ENCODE measurements at regions of chr7 and their contacts with region 1.

Region 1: DNA sequence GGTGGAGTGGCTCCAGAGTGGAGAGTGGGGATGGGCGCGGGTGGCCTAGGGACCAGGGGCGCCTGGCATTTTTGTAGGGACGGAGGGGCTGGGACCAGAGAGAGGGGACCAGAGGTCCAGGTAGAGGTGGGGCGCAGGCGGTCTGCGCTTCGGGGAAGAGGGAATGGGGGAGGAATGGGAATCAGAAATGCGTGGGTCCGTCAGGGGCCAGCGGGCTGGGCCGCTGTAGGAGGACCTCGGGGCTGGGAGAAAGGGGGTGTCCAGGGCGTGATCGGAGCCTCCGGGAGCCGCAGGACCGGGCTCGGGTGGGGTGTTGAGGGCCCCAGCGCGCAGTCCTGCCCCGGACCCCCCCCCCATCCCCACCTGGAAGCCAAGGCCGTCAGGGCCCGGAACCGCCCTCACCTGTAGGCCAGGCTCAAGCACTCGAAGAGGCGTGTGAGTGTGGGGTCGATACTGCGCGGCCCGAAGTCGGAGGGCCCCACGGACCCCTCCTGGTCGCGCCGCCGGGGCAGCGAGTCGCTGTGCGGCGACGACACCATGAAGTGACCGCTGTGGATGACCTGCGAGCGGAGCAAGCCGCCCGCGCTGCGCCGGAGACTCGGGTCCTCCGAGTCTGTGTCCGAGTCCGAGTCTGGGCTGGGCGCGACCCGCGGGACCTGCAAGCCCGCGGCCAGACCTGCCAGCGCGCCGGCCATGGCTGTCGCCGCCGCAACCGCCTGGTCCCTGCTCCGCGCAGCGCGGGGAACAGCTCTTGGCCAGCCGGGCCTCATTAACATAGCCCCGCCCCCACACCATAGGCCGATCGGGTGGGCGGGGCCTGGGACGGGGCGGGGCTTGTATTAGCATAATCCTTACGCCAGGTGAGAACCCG is at the start of gene MLXIPL:
- DNase-seq: peak; percentile 93 to 94
- H3K4me3 ChIP-seq: peak within 1 kb of the TSS; percentile 98
- H3K4me3 Mint-ChIP-seq: peak within 1 kb of the TSS; percentile 88
- H3K27ac Mint-ChIP-seq: no peak within 1 kb of the TSS
- H3K4me1 ChIP-seq: peaks cover 18% of the 10 kb centered on the region
- H3K4me1 Mint-ChIP-seq: peaks cover 8% of the 10 kb centered on the region
- H3K27me3 ChIP-seq: no peaks in the 10 kb centered on the region
- H3K27me3 Mint-ChIP-seq: peaks cover 3% of the 10 kb centered on the region
- CTCF ChIP-seq: no peak
- total RNA-seq, gene MLXIPL: 15.6 and 19.8 TPM in 2 replicates

Region 2: DNA sequence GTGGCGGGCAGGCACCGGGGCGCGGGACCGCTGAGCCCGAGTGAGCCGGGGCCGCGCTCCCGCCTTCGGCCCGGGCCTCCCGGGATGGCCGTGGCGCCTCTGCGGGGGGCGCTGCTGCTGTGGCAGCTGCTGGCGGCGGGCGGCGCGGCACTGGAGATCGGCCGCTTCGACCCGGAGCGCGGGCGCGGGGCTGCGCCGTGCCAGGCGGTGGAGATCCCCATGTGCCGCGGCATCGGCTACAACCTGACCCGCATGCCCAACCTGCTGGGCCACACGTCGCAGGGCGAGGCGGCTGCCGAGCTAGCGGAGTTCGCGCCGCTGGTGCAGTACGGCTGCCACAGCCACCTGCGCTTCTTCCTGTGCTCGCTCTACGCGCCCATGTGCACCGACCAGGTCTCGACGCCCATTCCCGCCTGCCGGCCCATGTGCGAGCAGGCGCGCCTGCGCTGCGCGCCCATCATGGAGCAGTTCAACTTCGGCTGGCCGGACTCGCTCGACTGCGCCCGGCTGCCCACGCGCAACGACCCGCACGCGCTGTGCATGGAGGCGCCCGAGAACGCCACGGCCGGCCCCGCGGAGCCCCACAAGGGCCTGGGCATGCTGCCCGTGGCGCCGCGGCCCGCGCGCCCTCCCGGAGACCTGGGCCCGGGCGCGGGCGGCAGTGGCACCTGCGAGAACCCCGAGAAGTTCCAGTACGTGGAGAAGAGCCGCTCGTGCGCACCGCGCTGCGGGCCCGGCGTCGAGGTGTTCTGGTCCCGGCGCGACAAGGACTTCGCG is 189.9 kb before region 1 on chr7:
- CTCF ChIA-PET with region 1: no interaction called
- POLR2A ChIA-PET with region 1: no interaction called
- intact Hi-C with region 1: no loop called
- DNase-seq: no peak
- H3K4me3 ChIP-seq: peak overlapping the region; percentile 60
- H3K4me3 Mint-ChIP-seq: peak overlapping the region; percentile 69
- H3K27ac Mint-ChIP-seq: no peak overlapping the region
- H3K4me1 ChIP-seq: peaks cover 9% of the 10 kb centered on the region; the same call in 1 of the 2 replicates
- H3K4me1 Mint-ChIP-seq: no peaks in the 10 kb centered on the region
- H3K27me3 ChIP-seq: no peaks in the 10 kb centered on the region
- H3K27me3 Mint-ChIP-seq: peaks cover 2% of the 10 kb centered on the region
- CTCF ChIP-seq: no peak

Region 3: DNA sequence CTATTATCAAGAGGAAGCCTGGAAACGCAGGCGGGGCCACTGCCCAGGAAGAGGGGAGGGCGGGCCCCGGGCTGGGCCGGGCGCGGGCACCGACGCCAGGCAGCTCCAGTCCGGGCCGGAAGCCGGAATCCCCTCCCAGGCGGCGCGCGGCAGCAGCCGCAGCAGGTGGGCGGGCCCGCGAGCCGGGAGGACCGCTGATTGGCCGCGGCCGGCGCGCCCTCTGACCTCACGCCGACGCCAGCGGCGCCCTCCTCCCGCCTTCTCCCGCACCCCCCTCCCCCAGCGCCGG is 67.0 kb before region 1 on chr7:
- CTCF ChIA-PET with region 1: no interaction called
- POLR2A ChIA-PET with region 1: no interaction called
- intact Hi-C with region 1: no loop called
- DNase-seq: peak; percentile 93 to 97
- H3K4me3 ChIP-seq: peak overlapping the region; percentile 98
- H3K4me3 Mint-ChIP-seq: peak overlapping the region; percentile 96
- H3K27ac Mint-ChIP-seq: peak overlapping the region; percentile 99
- H3K4me1 ChIP-seq: peaks cover 10% of the 10 kb centered on the region; the same call in 1 of the 2 replicates
- H3K4me1 Mint-ChIP-seq: peaks cover 11% of the 10 kb centered on the region
- H3K27me3 ChIP-seq: no peaks in the 10 kb centered on the region
- H3K27me3 Mint-ChIP-seq: no peaks in the 10 kb centered on the region
- CTCF ChIP-seq: no peak

Region 4: GRCh38 chr7:73606801-73607691 is 17.0 kb before region 1 on chr7:
- CTCF ChIA-PET with region 1: interaction called, 11 read pairs
- POLR2A ChIA-PET with region 1: no interaction called
- intact Hi-C with region 1: loop called (anchors 2 kb)
- DNase-seq: peak; percentile 63 to 77
- H3K4me3 ChIP-seq: no peak overlapping the region
- H3K4me3 Mint-ChIP-seq: no peak overlapping the region
- H3K27ac Mint-ChIP-seq: no peak overlapping the region
- H3K4me1 ChIP-seq: peaks cover 5% of the 10 kb centered on the region; the same call in 1 of the 2 replicates
- H3K4me1 Mint-ChIP-seq: peaks cover 7% of the 10 kb centered on the region
- H3K27me3 ChIP-seq: no peaks in the 10 kb centered on the region
- H3K27me3 Mint-ChIP-seq: no peaks in the 10 kb centered on the region
- CTCF ChIP-seq: peak; percentile 93 to 94

Region 5: DNA sequence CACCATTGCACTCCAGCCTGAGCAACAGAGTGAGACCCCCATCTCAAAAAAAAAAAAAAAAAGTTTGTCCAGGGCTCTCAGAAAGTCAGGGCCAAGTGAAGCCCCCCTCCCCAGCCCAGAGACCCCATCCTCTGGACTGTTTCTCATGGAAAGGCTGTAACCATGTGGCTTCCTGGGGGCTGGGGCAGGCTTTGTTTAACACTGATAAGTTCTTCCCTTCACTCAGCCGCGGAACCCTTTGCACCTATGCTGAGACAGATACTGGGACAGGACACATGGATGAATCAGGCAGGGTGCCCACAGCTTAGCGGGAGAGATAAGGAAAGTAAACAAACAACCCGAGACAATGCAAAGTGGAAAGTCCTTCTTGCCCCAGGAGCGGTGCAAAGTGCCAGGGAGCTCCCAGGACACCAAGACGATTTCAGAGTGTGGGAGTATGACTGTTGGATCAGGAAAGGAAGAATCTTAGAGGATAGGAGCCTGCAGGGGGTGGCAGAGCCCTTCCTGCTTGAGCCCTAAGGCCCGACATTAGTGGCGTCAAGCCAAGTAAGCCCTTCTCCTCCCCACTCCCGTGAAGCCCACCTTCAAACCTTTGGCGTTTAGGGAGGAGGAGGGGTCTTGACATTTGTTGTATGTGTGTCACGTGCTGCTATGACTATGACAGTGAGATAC is 11.3 kb before region 1 on chr7:
- CTCF ChIA-PET with region 1: interaction called, 11 read pairs
- POLR2A ChIA-PET with region 1: interaction called, 3 read pairs
- intact Hi-C with region 1: loop called (anchors 2 kb)
- DNase-seq: peak; percentile 83 to 90
- H3K4me3 ChIP-seq: no peak overlapping the region
- H3K4me3 Mint-ChIP-seq: peak overlapping the region; percentile 52
- H3K27ac Mint-ChIP-seq: peak overlapping the region; percentile 48
- H3K4me1 ChIP-seq: peaks cover 26% of the 10 kb centered on the region
- H3K4me1 Mint-ChIP-seq: peaks cover 15% of the 10 kb centered on the region
- H3K27me3 ChIP-seq: no peaks in the 10 kb centered on the region
- H3K27me3 Mint-ChIP-seq: no peaks in the 10 kb centered on the region
- CTCF ChIP-seq: peak in 1 of 2 experiments; percentile 43

Region 6: DNA sequence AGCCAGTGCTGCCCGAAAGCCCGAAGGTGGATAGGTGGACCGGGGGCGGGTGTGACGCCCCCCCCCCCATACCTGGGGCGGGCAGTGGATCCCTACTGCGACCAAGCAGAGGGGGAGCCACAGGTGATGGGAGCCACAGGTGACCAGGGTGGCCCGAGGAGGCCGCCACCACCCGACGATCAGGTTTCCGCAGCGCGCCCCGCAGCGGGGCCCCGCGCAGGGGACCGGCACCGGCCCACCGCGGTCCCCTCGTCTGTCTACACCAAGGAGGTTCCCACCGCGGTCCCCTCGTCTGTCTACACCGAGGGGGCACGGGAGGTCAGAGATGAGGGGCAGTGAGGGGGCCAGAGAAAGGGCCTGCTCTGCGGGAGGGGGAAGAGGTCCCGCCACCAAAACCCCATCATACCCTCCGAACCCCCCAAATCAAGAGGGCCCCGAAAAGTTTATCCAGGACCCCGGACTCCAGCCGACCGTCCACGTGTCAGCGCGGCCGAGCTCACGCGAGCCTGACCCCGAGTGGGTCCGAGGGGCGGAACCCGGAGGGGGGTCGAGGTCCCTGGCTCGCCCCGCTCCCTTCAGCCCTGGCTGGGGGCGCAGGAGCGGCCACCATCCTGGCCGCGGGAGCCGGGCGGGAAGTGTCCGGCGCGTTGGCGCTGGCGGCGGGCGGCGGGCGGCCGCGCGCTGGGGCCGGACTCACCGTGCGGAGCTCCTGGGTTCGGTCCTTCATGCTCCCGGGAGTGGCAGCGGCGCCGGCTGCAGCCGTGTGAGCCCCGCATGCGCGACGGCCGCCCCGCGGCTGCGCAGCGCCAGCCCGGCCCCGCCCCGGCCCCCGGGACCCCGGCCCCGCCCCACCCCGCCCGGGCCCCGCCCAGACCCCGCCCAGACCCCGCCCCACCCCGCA is 95.1 kb after region 1 on chr7 and contains the start of gene STX1A:
- CTCF ChIA-PET with region 1: interaction called, 4 read pairs
- POLR2A ChIA-PET with region 1: interaction called, 4 read pairs
- intact Hi-C with region 1: loop called (anchors 5 kb)
- DNase-seq: peak; percentile 79 to 86
- H3K4me3 ChIP-seq: peak within 1 kb of the TSS; percentile 89
- H3K4me3 Mint-ChIP-seq: peak within 1 kb of the TSS; percentile 73
- H3K27ac Mint-ChIP-seq: peak within 1 kb of the TSS; percentile 75
- H3K4me1 ChIP-seq: peaks cover 38% of the 10 kb centered on the region
- H3K4me1 Mint-ChIP-seq: peaks cover 16% of the 10 kb centered on the region
- H3K27me3 ChIP-seq: no peaks in the 10 kb centered on the region
- H3K27me3 Mint-ChIP-seq: no peaks in the 10 kb centered on the region
- CTCF ChIP-seq: no peak
- total RNA-seq, gene STX1A: 26.4 and 28.6 TPM in 2 replicates

Region 7: DNA sequence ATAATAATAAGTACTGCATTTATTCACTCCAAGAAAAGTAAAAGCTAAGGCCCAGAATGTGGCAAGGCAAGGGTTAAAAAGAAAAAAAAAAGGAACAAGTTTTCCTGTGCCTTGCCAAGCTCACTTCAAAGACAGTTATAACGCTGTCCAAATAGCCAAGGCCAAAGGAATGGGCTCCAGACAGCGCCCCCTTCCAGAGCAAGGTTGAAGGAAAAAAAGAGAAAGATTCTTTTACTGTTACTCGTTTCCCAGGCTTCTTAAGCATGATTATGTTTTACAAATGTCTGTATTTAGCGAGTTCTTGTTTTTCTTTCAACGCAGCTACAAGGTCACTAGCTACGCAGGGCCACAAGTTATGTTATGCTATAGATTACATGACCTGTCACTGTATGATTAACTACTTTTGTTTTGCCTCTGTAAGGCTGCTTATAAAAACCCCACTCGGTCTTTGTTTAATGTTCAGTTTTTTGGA is 541.0 kb after region 1 on chr7:
- CTCF ChIA-PET with region 1: no interaction called
- POLR2A ChIA-PET with region 1: no interaction called
- intact Hi-C with region 1: no loop called
- DNase-seq: peak in 1 of 2 experiments; percentile 45
- H3K4me3 ChIP-seq: no peak overlapping the region
- H3K4me3 Mint-ChIP-seq: no peak overlapping the region
- H3K27ac Mint-ChIP-seq: no peak overlapping the region
- H3K4me1 ChIP-seq: peaks cover 4% of the 10 kb centered on the region
- H3K4me1 Mint-ChIP-seq: no peaks in the 10 kb centered on the region
- H3K27me3 ChIP-seq: no peaks in the 10 kb centered on the region
- H3K27me3 Mint-ChIP-seq: no peaks in the 10 kb centered on the region
- CTCF ChIP-seq: peak in 1 of 2 experiments; percentile 14